ENCODE measurements at regions of chr13 and their contacts with region 1.

Region 1: GRCh38 chr13:67238277-67238859 is 8.2 kb upstream of the PCDH9 start:
- DNase-seq: no peak
- H3K4me3 ChIP-seq: no peak overlapping the region
- H3K27ac ChIP-seq: no peak overlapping the region
- H3K27me3 ChIP-seq: no peaks in the 10 kb centered on the region
- CTCF ChIP-seq: peak; percentile 64

Region 2: DNA sequence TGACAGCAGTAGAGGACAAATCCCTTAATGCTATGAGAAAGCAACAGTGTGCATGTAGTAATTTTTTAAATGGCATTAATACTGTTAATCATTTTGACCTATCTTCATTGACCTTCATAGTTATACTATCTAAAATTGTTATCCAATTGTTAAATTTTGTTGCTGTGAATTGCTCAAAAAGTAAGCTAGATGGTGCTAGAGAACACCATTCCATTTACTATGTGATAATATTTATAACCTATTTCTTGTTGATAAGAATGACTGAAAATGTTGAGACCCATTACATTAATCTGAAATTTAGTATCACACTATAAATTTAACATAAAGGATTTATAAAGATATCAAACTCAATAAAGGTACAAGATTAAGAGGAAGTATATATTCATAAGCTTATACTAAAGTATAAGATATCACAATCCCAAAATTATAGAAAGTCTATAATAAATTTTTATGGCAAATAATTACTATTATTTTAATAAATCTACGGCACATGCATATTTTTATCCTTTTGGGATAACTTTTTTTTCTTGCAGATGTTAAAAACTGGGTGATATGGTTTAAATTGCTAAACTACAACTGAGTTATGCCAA is 1581.5 kb before region 1 on chr13:
- CTCF ChIA-PET with region 1: interaction called, 18 read pairs
- POLR2A ChIA-PET with region 1: no interaction called
- DNase-seq: no peak
- H3K4me3 ChIP-seq: no peak overlapping the region
- H3K27ac ChIP-seq: no peak overlapping the region
- H3K27me3 ChIP-seq: no peaks in the 10 kb centered on the region
- CTCF ChIP-seq: peak; percentile 67

Region 3: GRCh38 chr13:66689628-66690027 is 548.7 kb before region 1 on chr13:
- CTCF ChIA-PET with region 1: interaction called, 14 read pairs
- POLR2A ChIA-PET with region 1: no interaction called
- DNase-seq: no peak
- H3K4me3 ChIP-seq: no peak overlapping the region
- H3K27ac ChIP-seq: no peak overlapping the region
- H3K27me3 ChIP-seq: no peaks in the 10 kb centered on the region
- CTCF ChIP-seq: peak; percentile 47

Region 4: GRCh38 chr13:67416047-67416925 is 177.9 kb after region 1 on chr13:
- CTCF ChIA-PET with region 1: interaction called, 18 read pairs
- POLR2A ChIA-PET with region 1: no interaction called
- DNase-seq: peak; percentile 2
- H3K4me3 ChIP-seq: no peak overlapping the region
- H3K27ac ChIP-seq: no peak overlapping the region
- H3K27me3 ChIP-seq: no peaks in the 10 kb centered on the region
- CTCF ChIP-seq: peak; percentile 80

Region 5: GRCh38 chr13:67438465-67438864 is 200.1 kb after region 1 on chr13:
- CTCF ChIA-PET with region 1: no interaction called
- POLR2A ChIA-PET with region 1: no interaction called
- DNase-seq: no peak
- H3K4me3 ChIP-seq: no peak overlapping the region
- H3K27ac ChIP-seq: no peak overlapping the region
- H3K27me3 ChIP-seq: no peaks in the 10 kb centered on the region
- CTCF ChIP-seq: no peak

Region 6: GRCh38 chr13:67515895-67516294 is 277.5 kb after region 1 on chr13:
- CTCF ChIA-PET with region 1: no interaction called
- POLR2A ChIA-PET with region 1: no interaction called
- DNase-seq: peak; percentile 66
- H3K4me3 ChIP-seq: no peak overlapping the region
- H3K27ac ChIP-seq: no peak overlapping the region
- H3K27me3 ChIP-seq: no peaks in the 10 kb centered on the region
- CTCF ChIP-seq: no peak

Region 7: DNA sequence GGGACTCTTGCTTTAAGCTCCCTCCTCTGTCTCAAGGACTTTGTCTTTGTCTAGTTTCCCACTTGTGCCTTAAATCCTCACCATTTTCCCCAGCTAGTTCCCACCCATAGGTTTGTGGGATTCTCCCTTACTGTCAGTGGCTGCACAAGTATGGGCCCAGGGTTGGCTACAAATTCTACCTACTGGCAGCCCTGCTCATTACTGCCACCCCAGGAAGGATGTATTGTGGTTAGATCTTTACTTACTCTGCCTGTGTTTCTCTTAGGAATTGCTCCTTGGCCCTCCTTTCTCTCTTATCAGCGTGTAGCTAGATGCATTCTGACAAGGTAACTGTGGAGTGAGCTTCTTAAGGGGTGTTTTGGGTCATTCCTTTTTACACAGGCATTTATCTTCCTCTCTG is 405.3 kb after region 1 on chr13:
- CTCF ChIA-PET with region 1: no interaction called
- POLR2A ChIA-PET with region 1: no interaction called
- DNase-seq: no peak
- H3K4me3 ChIP-seq: no peak overlapping the region
- H3K27ac ChIP-seq: no peak overlapping the region
- H3K27me3 ChIP-seq: no peaks in the 10 kb centered on the region
- CTCF ChIP-seq: no peak

Region 8: GRCh38 chr13:67772807-67773453 is 534.6 kb after region 1 on chr13:
- CTCF ChIA-PET with region 1: no interaction called
- POLR2A ChIA-PET with region 1: no interaction called
- DNase-seq: no peak
- H3K4me3 ChIP-seq: no peak overlapping the region
- H3K27ac ChIP-seq: no peak overlapping the region
- H3K27me3 ChIP-seq: no peaks in the 10 kb centered on the region
- CTCF ChIP-seq: no peak

Measured in AG04450 (cell line).